ENCODE measurements at regions of chr1 and their contacts with region 1.

Region 1: DNA sequence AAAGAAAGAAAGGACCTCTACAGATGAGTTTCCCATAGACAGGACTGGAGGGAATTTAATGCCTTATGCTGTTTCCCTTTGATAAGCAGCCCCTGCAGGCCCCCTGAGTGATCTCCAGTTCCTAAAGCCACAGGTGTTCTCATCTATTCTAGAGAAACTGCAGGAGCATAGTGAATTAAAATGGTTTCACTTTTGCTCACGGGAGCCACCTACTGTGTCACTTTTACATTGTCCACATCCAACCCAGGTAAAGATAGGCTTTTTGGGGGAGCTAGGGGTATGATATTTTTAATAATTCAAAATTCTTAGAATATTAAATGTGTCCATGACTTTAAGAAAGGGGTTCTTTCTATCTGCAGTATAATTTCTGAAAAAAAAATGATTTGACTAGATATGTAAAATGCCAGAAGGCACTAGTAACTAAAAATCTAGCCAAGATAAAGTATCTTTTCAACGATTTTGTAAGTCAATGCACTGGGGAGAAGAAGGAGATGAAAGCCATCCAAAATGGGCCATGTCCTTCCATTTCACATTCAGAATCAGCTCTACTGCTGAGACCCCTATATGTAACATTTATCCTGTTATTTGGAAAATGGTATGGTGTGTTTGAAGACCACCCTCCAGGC is 267.3 kb upstream of the DUSP10 start:
- DNase-seq: peak; percentile 60 to 73 (median 72)
- H3K4me3 ChIP-seq: peak overlapping the region in 1 of 7 experiments; percentile 56
- H3K27ac ChIP-seq: no peak overlapping the region
- H3K4me1 ChIP-seq: no peaks in the 10 kb centered on the region
- H3K27me3 ChIP-seq: no peaks in the 10 kb centered on the region

Region 2: DNA sequence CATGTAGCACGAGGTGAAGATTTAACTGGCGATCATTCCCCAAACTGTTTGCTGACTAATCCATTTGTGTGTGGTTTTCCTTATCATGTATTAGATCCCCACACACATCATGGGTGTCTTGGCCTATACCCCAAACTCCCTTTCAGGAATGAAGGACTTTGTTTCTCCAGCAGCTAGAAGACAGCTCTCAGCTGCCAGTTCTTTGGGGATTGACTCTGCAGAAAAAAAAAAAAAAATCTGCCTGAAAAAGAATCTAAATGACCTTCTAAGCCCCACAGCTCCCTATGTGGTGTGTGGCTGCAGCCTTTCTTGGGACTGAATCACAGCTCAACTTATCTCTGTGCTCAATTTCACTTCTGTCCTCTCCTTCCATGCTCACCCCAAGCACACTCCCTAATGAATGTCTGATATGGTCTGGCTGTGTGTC is 11.0 kb before region 1 on chr1:
- CTCF ChIA-PET with region 1: interaction called, 10 read pairs
- POLR2A ChIA-PET with region 1: no interaction called
- DNase-seq: no peak
- H3K4me3 ChIP-seq: no peak overlapping the region
- H3K27ac ChIP-seq: no peak overlapping the region
- H3K4me1 ChIP-seq: peaks cover 0 to 5% (median 2%) of the 10 kb centered on the region in 4 experiments
- H3K27me3 ChIP-seq: no peaks in the 10 kb centered on the region

Region 3: GRCh38 chr1:222073307-222073995 is 64.2 kb after region 1 on chr1:
- CTCF ChIA-PET with region 1: no interaction called
- POLR2A ChIA-PET with region 1: no interaction called
- DNase-seq: no peak
- H3K4me3 ChIP-seq: no peak overlapping the region
- H3K27ac ChIP-seq: no peak overlapping the region
- H3K4me1 ChIP-seq: peaks cover 0 to 10% (median 4%) of the 10 kb centered on the region in 4 experiments
- H3K27me3 ChIP-seq: no peaks in the 10 kb centered on the region